Dorsolateral prefrontal cortex (tissue), 120 donors: ENCODE measurements at regions of chr3 and their contacts with region 1.

Region 1: DNA sequence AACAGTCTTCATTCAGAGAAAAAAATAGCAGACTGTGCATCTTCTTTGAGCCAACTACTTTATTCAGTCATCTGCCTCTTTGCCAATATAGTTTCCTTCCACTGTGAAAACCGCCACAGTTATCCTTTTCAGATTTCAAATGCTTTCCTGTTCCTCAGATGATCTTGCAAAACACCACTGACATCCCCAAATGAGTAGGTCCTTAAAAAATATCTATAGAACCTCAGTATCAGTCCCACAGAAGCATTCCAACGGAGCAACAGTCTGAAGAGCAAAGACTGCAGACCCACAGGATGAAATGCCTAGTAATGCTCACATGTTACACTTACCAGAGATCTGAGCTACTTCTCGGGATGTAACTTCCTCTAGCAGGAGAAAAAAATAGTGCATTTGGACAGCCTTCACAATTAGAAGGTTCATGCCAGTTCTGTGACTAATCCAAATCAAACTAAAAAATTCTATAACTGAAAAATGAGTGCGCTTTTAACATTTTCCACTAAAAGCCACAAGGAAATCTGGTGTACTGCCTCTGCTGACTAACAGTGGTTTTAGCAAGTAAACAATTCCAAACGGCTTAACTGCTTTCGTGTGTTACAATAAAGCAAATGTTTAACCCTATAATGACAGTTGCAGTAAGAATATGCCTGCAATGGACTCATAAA is at the start of gene ANKRD28:
- DNase-seq: peak in 1 of 10 donors; percentile 21
- H3K4me3 ChIP-seq: peak within 1 kb of the TSS; percentile 25 to 74 (median 56)
- H3K27ac ChIP-seq: peak within 1 kb of the TSS; percentile 72 to 97 (median 93)
- H3K27me3 ChIP-seq: no peaks in the 10 kb centered on the region
- CTCF ChIP-seq: peak in 33 of 56 donors; percentile 17 to 50 (median 37)
- total RNA-seq, gene ANKRD28: 46.9 to 110 (median 74.2) TPM

Region 2: DNA sequence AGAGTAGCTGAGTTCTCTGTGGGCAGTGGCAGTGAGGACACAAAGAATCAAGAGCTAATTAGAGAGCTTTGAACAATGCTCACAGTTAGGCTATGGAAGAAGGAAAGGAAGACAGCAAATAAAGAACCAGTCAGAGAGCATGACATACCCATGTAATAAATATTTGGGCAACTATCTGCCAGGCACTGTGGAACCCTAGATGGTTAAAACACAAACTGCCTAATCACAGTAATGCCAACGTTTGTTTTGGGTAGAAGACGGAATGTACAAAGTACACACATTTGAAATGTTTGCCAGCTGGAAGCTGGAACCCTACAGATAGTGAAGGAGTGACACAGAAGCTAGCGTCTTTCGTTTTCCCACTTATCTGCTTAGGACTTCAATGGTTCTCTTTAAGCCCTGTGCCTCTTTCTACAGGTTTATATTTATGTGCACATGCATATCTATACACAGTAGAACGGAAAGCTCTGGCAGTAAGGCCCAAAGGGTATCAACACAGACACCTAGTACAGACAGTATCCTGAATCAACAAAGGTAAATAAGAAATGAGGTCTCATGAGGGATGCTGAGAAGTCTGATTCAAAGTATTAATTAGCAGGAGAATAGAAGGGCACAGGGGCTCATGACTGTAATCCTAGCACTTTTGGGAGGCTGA is 44.6 kb before region 1 on chr3:
- intact Hi-C with region 1: loop called in 1 of 2 experiments (anchors 5 kb)
- DNase-seq: no peak
- H3K4me3 ChIP-seq: peak overlapping the region in 27 of 59 donors; percentile 1 to 43 (median 17)
- H3K27ac ChIP-seq: peak overlapping the region; percentile 21 to 90 (median 77)
- H3K27me3 ChIP-seq: no peaks in the 10 kb centered on the region
- CTCF ChIP-seq: peak in 1 of 56 donors; percentile 12